Posterior cingulate gyrus (tissue), 11 donors: ENCODE measurements at regions of chr14 and their contacts with region 1.

Region 1: GRCh38 chr14:57268161-57269069 is at the starts of genes AP5M1 and EXOC5:
- DNase-seq: peak; percentile 83 to 99 (median 93)

Region 2: GRCh38 chr14:57390028-57390805 is 121.8 kb after region 1 on chr14 and contains the start of gene NAA30:
- intact Hi-C with region 1: loop called (anchors 5 kb)
- DNase-seq: peak; percentile 72 to 98 (median 86)